ENCODE measurements at regions of chr13 and their contacts with region 1.

Region 1: GRCh38 chr13:26985285-26985878 is 186.2 kb downstream of the USP12 start:
- DNase-seq: peak; percentile 61
- H3K4me3 Mint-ChIP-seq: no peak overlapping the region
- H3K27ac Mint-ChIP-seq: no peak overlapping the region
- H3K4me1 Mint-ChIP-seq: peaks cover 19% of the 10 kb centered on the region
- H3K27me3 Mint-ChIP-seq: peaks cover 7% of the 10 kb centered on the region

Region 2: GRCh38 chr13:27147530-27148170 is 162.3 kb after region 1 on chr13:
- intact Hi-C with region 1: no loop called
- DNase-seq: no peak
- H3K4me3 Mint-ChIP-seq: peak overlapping the region; percentile 55
- H3K27ac Mint-ChIP-seq: peak overlapping the region; percentile 93
- H3K4me1 Mint-ChIP-seq: peaks cover 71% of the 10 kb centered on the region
- H3K27me3 Mint-ChIP-seq: no peaks in the 10 kb centered on the region

Region 3: GRCh38 chr13:27203854-27204253 is 218.5 kb after region 1 on chr13:
- intact Hi-C with region 1: loop called (anchors 2 kb)
- DNase-seq: no peak
- H3K4me3 Mint-ChIP-seq: no peak overlapping the region
- H3K27ac Mint-ChIP-seq: no peak overlapping the region
- H3K4me1 Mint-ChIP-seq: peaks cover 14% of the 10 kb centered on the region
- H3K27me3 Mint-ChIP-seq: no peaks in the 10 kb centered on the region

Region 4: DNA sequence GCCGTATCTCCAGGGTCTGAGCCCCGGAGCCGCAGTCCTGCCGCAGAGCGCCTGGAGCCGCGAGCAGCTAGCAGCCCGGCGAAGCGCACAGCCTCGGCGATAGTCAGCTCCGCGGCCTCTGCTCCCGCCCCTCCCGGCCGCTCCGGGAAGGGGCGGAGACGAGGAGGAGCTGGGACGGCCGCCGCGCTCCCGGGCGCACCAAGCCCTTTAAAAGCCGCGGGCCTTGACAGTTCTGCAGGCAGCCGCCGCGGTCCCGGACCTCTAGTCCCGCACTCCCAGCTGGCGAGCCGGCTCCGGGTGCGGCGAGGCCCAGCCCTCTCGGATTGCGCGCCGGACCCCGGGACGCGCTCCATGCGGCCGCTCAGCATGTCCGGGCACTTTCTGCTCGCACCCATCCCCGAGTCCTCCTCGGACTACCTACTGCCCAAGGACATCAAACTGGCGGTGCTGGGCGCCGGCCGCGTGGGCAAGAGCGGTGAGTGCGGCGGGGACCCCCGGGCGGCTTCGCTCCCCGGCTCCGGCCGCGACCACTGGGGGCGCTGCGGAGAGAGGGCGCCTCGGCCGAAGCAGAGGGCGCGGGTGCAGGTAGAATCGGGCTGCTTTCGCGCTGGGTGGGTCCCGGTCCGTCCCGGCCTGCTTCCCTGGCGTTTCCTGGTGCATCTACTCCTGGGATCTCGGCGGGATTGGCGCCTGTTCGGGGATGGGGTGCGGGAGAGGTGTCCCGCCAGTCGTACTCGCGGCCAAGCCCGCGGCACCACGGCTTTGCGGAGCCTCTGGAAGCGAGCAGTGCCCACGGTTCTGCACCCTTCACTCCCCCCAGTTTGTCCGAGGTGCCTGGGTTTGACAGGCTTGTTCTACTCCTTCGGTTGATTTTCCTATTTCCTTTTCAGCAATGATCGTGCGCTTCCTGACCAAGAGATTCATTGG is 285.5 kb after region 1 on chr13 and contains the start of gene RASL11A:
- intact Hi-C with region 1: loop called (anchors 1 kb)
- DNase-seq: peak; percentile 63
- H3K4me3 Mint-ChIP-seq: peak within 1 kb of the TSS; percentile 89
- H3K27ac Mint-ChIP-seq: peak within 1 kb of the TSS; percentile 24
- H3K4me1 Mint-ChIP-seq: peaks cover 11% of the 10 kb centered on the region
- H3K27me3 Mint-ChIP-seq: peaks cover 40% of the 10 kb centered on the region
- total RNA-seq, gene RASL11A: 1.9 and 3.2 TPM in 2 replicates

Region 5: DNA sequence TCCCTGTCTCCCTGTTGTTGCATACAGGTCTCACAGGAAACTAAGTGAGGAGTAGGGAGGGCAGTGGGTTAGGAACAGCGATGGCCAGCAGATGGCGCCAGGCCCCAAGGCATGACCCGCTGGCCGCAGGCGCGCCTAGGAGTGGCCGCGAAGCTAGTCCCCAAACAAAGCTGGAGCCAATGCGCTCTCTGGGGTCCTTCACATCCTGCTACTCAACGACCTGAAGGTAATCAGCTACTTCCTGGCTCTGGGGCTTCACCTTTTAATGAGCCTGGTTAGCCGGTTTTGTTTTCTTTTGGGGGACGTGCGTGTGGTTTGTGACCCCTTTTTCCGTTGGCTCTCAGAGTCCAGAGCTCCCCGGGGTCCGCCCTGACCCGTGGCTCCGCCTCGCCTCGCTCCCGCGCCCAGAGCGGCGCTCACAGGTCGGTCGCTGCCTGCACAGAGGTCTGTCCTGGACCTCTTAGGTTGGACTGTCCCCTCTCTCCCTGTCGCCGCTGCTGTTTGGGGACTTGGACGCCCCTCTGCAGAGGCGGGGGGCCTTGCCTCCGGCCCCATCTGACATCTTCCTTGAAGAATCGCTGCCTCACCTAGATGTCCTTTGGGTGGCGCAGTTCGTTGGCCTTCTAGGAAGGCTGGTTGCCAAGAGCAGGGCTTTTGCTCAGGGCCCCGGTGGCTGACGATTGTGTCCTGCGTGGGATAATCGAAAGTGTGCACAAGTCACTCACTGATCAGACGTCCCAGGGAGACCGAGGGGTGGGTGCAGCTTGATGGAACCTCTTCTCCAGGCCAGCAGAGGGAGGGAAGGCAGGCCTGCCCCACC is 376.9 kb after region 1 on chr13:
- intact Hi-C with region 1: loop called (anchors 1 kb)
- DNase-seq: peak; percentile 71
- H3K4me3 Mint-ChIP-seq: peak overlapping the region; percentile 49
- H3K27ac Mint-ChIP-seq: no peak overlapping the region
- H3K4me1 Mint-ChIP-seq: no peaks in the 10 kb centered on the region
- H3K27me3 Mint-ChIP-seq: peaks cover 25% of the 10 kb centered on the region

Measured in activated T-helper 1 cell treated with anti-CD3 and anti-CD28 coated beads, Interleukin-12 subunit alpha, Interleukin-12 subunit beta, Interleukin-2, Interleukin-4 antibody, amounts not matched to agents 30 ng/mL and 10 ng/mL and 1 ng/mL, durations not matched to agents 14 hours and 24 hours and 36 hours (primary cell).